ENCODE measurements at regions of chr1 and their contacts with region 1.

Region 1: GRCh38 chr1:179882243-179883039 is at the start of gene TOR1AIP1:
- DNase-seq: peak; percentile 91 to 98 (median 98)
- ATAC-seq: peak; percentile 87
- H3K4me3 ChIP-seq: peak within 1 kb of the TSS; percentile 96
- H3K4me3 Mint-ChIP-seq: peak within 1 kb of the TSS; percentile 93 to 99 (median 97)
- H3K27ac ChIP-seq: peak within 1 kb of the TSS; percentile 98
- H3K27ac Mint-ChIP-seq: peak within 1 kb of the TSS; percentile 99 to 100 (median 100)
- H3K4me1 ChIP-seq: peaks cover 27 to 37% of the 10 kb centered on the region in 2 donors
- H3K4me1 Mint-ChIP-seq: peaks cover 27 to 79% (median 63%) of the 10 kb centered on the region in 7 donors
- H3K27me3 ChIP-seq: no peaks in the 10 kb centered on the region
- H3K27me3 Mint-ChIP-seq: no peaks in the 10 kb centered on the region
- total RNA-seq, gene TOR1AIP1: 47.4 to 88.6 (median 59.5) TPM

Region 2: DNA sequence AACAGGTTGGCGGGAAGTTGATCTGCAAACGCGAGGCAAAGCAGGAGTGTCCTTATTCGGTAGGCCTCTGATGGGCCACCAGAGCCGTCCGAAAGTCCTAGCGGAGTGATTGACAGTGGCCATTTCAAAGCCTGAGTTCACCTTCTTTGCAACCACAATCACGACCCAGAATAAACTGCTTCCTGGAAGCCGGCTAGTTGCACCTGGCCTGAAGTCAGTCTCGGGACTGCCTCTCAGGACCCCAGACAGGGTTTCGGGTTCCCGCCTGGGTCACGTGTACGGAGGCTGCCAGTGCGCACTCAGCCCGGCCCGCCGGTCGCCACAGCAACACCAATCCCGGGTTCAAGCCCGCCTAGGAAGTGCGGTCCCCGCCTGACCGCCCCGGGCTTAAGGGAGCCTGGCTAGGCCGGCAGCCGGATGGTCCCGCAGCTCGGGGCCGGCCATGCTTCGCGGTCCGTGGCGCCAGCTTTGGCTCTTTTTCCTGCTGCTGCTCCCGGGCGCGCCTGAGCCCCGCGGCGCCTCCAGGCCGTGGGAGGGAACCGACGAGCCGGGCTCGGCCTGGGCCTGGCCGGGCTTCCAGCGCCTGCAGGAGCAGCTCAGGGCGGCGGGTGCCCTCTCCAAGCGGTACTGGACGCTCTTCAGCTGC is 800.6 kb before region 1 on chr1 and contains the start of gene TOR3A:
- CTCF ChIA-PET with region 1: no interaction called
- POLR2A ChIA-PET with region 1: interaction called, 3 read pairs
- intact Hi-C with region 1: loop called in 1 of 2 experiments (anchors 5 kb)
- DNase-seq: peak; percentile 51 to 82 (median 58)
- ATAC-seq: peak; percentile 80
- H3K4me3 ChIP-seq: peak within 1 kb of the TSS; percentile 93
- H3K4me3 Mint-ChIP-seq: peak within 1 kb of the TSS; percentile 91 to 100 (median 95)
- H3K27ac ChIP-seq: peak within 1 kb of the TSS; percentile 76
- H3K27ac Mint-ChIP-seq: peak within 1 kb of the TSS; percentile 84 to 99 (median 95)
- H3K4me1 ChIP-seq: peaks cover 4 to 11% of the 10 kb centered on the region in 2 donors
- H3K4me1 Mint-ChIP-seq: peaks cover 14 to 38% (median 25%) of the 10 kb centered on the region in 7 donors
- H3K27me3 ChIP-seq: no peaks in the 10 kb centered on the region
- H3K27me3 Mint-ChIP-seq: no peaks in the 10 kb centered on the region
- total RNA-seq, gene TOR3A: 18.8 to 43.8 (median 21.7) TPM

Region 3: DNA sequence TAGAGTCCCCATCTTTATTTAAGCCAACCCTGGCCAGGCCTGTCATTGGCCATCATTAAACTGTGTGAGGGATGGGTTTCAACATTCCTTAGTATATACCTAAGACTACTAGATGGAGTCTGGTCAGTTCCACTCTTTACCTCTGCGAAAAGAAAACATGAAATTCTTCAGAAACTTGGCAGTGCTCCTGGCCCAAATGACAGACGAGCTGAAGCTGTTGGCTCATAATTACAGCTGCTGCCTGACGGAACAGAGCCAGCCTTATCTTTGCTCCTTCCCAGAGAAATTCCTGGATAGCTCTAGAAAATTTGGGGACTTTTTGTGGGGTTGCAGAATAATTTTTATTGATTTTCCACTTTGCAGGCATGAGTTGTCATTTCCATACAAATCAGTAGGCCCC is 337.1 kb before region 1 on chr1:
- CTCF ChIA-PET with region 1: no interaction called
- POLR2A ChIA-PET with region 1: no interaction called
- intact Hi-C with region 1: no loop called
- DNase-seq: no peak
- ATAC-seq: no peak
- H3K4me3 ChIP-seq: no peak overlapping the region
- H3K4me3 Mint-ChIP-seq: no peak overlapping the region
- H3K27ac ChIP-seq: no peak overlapping the region
- H3K27ac Mint-ChIP-seq: no peak overlapping the region
- H3K4me1 ChIP-seq: no peaks in the 10 kb centered on the region
- H3K4me1 Mint-ChIP-seq: no peaks in the 10 kb centered on the region
- H3K27me3 ChIP-seq: peaks cover 0 to 3% of the 10 kb centered on the region in 2 donors
- H3K27me3 Mint-ChIP-seq: peaks cover 0 to 15% (median 7%) of the 10 kb centered on the region in 5 donors

Region 4: GRCh38 chr1:179809506-179810366 is 72.7 kb before region 1 on chr1:
- CTCF ChIA-PET with region 1: interaction called, 6 read pairs
- POLR2A ChIA-PET with region 1: interaction called, 85 read pairs
- intact Hi-C with region 1: no loop called
- DNase-seq: peak; percentile 53 to 82 (median 78)
- ATAC-seq: peak; percentile 87
- H3K4me3 ChIP-seq: no peak overlapping the region
- H3K4me3 Mint-ChIP-seq: peak overlapping the region in 5 of 10 donors; percentile 20 to 46 (median 32)
- H3K27ac ChIP-seq: no peak overlapping the region
- H3K27ac Mint-ChIP-seq: peak overlapping the region in 6 of 9 donors; percentile 2 to 82 (median 26)
- H3K4me1 ChIP-seq: peaks cover 6 to 13% of the 10 kb centered on the region in 2 donors
- H3K4me1 Mint-ChIP-seq: peaks cover 1 to 13% (median 12%) of the 10 kb centered on the region in 7 donors
- H3K27me3 ChIP-seq: no peaks in the 10 kb centered on the region
- H3K27me3 Mint-ChIP-seq: peaks cover 0 to 6% (median 0%) of the 10 kb centered on the region in 5 donors

Region 5: GRCh38 chr1:179867807-179868330 is 14.6 kb before region 1 on chr1:
- CTCF ChIA-PET with region 1: interaction called, 4 read pairs
- POLR2A ChIA-PET with region 1: interaction called, 7 read pairs
- intact Hi-C with region 1: loop called in 1 of 2 experiments (anchors 1 kb)
- DNase-seq: peak; percentile 17 to 58 (median 46)
- ATAC-seq: peak; percentile 85
- H3K4me3 ChIP-seq: no peak overlapping the region
- H3K4me3 Mint-ChIP-seq: no peak overlapping the region
- H3K27ac ChIP-seq: no peak overlapping the region
- H3K27ac Mint-ChIP-seq: peak overlapping the region in 5 of 9 donors; percentile 1 to 54 (median 36)
- H3K4me1 ChIP-seq: peaks cover 0 to 8% of the 10 kb centered on the region in 2 donors
- H3K4me1 Mint-ChIP-seq: peaks cover 12 to 43% (median 25%) of the 10 kb centered on the region in 7 donors
- H3K27me3 ChIP-seq: no peaks in the 10 kb centered on the region
- H3K27me3 Mint-ChIP-seq: no peaks in the 10 kb centered on the region

Region 6: DNA sequence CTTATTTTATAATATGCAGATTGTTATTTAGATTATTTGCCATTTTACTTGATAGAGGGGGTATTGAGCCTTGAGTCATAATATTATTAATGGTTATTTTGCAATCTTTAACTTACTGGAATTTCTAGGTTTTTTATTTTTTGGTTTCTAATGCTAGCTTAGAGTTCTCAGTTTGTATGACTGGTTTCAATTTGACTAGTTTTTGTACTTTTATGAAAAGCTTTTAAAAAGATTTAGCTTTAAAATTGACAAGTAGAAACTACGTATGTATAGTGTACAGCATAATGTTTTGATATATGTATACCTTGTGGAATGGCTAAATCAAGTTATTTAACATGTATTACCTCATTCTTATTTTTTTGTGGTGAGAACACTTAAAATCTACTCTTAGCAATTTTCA is 113.7 kb after region 1 on chr1:
- CTCF ChIA-PET with region 1: no interaction called
- POLR2A ChIA-PET with region 1: no interaction called
- intact Hi-C with region 1: no loop called
- DNase-seq: no peak
- ATAC-seq: no peak
- H3K4me3 ChIP-seq: no peak overlapping the region
- H3K4me3 Mint-ChIP-seq: no peak overlapping the region
- H3K27ac ChIP-seq: no peak overlapping the region
- H3K27ac Mint-ChIP-seq: no peak overlapping the region
- H3K4me1 ChIP-seq: no peaks in the 10 kb centered on the region
- H3K4me1 Mint-ChIP-seq: peaks cover 0 to 18% (median 5%) of the 10 kb centered on the region in 7 donors
- H3K27me3 ChIP-seq: no peaks in the 10 kb centered on the region
- H3K27me3 Mint-ChIP-seq: no peaks in the 10 kb centered on the region

Region 7: DNA sequence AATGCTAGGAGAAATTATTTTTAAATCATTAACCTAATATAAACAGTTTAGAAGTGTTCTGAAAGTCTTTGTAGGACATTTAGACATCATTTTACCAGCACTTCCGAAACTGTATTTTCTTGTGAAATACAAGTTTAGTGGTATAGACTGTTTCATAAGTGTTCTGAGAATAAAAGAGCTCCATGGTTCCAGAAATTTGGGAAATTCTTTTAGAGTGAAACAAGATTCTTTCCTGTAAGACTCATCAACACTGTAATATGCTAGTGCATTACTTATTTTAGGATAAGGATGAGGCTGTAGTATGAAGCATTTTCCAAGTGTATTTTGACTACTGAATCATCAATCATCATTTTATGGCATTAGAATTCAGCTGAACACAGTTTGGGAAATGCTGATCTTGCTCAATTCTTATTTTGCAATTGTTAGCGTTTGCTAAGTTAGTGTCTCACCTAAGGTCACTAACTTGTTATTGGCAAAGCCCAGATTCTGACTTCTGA is 145.6 kb after region 1 on chr1:
- CTCF ChIA-PET with region 1: no interaction called
- POLR2A ChIA-PET with region 1: no interaction called
- intact Hi-C with region 1: loop called in 1 of 2 experiments (anchors 10 kb)
- DNase-seq: no peak
- ATAC-seq: no peak
- H3K4me3 ChIP-seq: no peak overlapping the region
- H3K4me3 Mint-ChIP-seq: no peak overlapping the region
- H3K27ac ChIP-seq: no peak overlapping the region
- H3K27ac Mint-ChIP-seq: no peak overlapping the region
- H3K4me1 ChIP-seq: no peaks in the 10 kb centered on the region
- H3K4me1 Mint-ChIP-seq: peaks cover 0 to 13% (median 0%) of the 10 kb centered on the region in 7 donors
- H3K27me3 ChIP-seq: no peaks in the 10 kb centered on the region
- H3K27me3 Mint-ChIP-seq: no peaks in the 10 kb centered on the region

Region 8: DNA sequence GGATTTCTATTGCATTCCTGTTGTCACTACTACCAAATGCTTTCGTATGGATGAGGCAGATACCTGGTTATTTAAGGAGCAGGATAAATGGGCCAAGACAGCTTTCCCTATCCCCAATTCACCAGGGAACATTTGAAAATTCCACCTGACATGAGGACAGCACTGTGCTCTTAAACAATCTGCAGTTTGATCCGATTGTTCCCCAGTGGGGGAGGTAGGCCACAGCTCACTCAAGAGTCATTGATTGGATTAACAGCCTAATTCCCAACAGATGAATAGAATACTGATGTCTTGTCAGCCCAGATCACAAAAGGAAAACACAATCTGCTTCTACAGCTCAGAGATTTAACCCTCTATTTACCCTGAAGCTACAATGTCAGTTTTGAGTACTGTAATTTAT is 471.5 kb after region 1 on chr1:
- CTCF ChIA-PET with region 1: no interaction called
- POLR2A ChIA-PET with region 1: no interaction called
- intact Hi-C with region 1: no loop called
- DNase-seq: no peak
- ATAC-seq: no peak
- H3K4me3 ChIP-seq: no peak overlapping the region
- H3K4me3 Mint-ChIP-seq: no peak overlapping the region
- H3K27ac ChIP-seq: no peak overlapping the region
- H3K27ac Mint-ChIP-seq: no peak overlapping the region
- H3K4me1 ChIP-seq: no peaks in the 10 kb centered on the region
- H3K4me1 Mint-ChIP-seq: peaks cover 0 to 17% (median 10%) of the 10 kb centered on the region in 7 donors
- H3K27me3 ChIP-seq: no peaks in the 10 kb centered on the region
- H3K27me3 Mint-ChIP-seq: no peaks in the 10 kb centered on the region

Region 9: DNA sequence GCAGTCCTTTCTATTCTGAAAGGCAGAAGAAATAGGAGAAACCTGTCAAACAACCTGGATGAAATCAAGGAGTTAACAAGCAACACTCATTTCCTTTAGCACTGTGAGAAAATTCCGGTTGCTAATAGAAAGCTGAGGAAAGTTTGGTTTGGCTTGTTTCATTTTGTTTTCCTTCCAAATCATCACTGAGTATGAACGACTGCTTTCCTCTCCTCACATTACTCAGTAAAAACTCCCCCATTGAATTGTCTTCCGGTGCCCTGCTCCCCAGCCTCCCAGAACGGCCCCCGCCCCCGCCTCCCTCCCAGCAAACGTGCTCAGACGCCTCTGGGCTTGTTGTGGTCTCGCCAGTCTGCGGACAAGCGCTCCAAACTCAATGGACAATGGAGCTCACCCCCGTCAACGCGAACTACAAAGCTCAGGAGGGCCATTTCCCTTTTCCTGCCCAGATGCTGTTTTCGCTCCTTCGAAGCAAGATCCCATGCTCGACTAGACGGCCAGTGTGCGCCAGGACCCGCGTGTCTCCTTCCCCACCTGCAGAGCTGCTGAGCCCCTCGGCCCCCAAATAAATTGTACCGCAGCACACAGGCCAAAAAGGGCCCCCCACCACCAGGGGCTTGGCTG is 1139.5 kb after region 1 on chr1:
- CTCF ChIA-PET with region 1: no interaction called
- POLR2A ChIA-PET with region 1: no interaction called
- intact Hi-C with region 1: loop called in 1 of 2 experiments (anchors 2 kb)
- DNase-seq: peak; percentile 12 to 67 (median 33)
- ATAC-seq: peak; percentile 21
- H3K4me3 ChIP-seq: peak overlapping the region; percentile 84
- H3K4me3 Mint-ChIP-seq: peak overlapping the region; percentile 92 to 98 (median 94)
- H3K27ac ChIP-seq: peak overlapping the region; percentile 84
- H3K27ac Mint-ChIP-seq: peak overlapping the region; percentile 93 to 100 (median 97)
- H3K4me1 ChIP-seq: peaks cover 21 to 22% of the 10 kb centered on the region in 2 donors
- H3K4me1 Mint-ChIP-seq: peaks cover 17 to 59% (median 48%) of the 10 kb centered on the region in 7 donors
- H3K27me3 ChIP-seq: no peaks in the 10 kb centered on the region
- H3K27me3 Mint-ChIP-seq: peaks cover 0 to 25% (median 0%) of the 10 kb centered on the region in 5 donors

Measured in naive thymus-derived CD4-positive, alpha-beta T cell (primary cell).